ENCODE measurements at regions of chr2 and their contacts with region 1.

Region 1: GRCh38 chr2:189762551-189763298 is at the start of gene OSGEPL1:
- DNase-seq: peak; percentile 95 to 96 (median 95)
- ATAC-seq: peak; percentile 97 to 98 (median 98)
- H3K4me3 ChIP-seq: peak within 1 kb of the TSS; percentile 70 to 86 (median 72)
- H3K27ac ChIP-seq: peak within 1 kb of the TSS; percentile 78 to 84 (median 83)
- H3K4me1 ChIP-seq: peaks cover 0 to 13% (median 0%) of the 10 kb centered on the region in 4 donors
- H3K27me3 ChIP-seq: no peaks in the 10 kb centered on the region
- CTCF ChIP-seq: peak; percentile 33 to 55 (median 44)
- POLR2A ChIP-seq: peak; percentile 60
- total RNA-seq, gene OSGEPL1: 2.6 to 6.1 (median 4.3) TPM

Region 2: GRCh38 chr2:189483998-189484740 is 278.6 kb before region 1 on chr2:
- intact Hi-C with region 1: no loop called
- DNase-seq: no peak
- ATAC-seq: peak in 2 of 4 donors; percentile 39 to 45
- H3K4me3 ChIP-seq: no peak overlapping the region
- H3K27ac ChIP-seq: no peak overlapping the region
- H3K4me1 ChIP-seq: peaks cover 0 to 12% (median 3%) of the 10 kb centered on the region in 4 donors
- H3K27me3 ChIP-seq: no peaks in the 10 kb centered on the region
- CTCF ChIP-seq: no peak
- POLR2A ChIP-seq: no peak

Region 3: GRCh38 chr2:189661148-189661956 is 101.4 kb before region 1 on chr2 and contains the start of gene ASNSD1:
- intact Hi-C with region 1: loop called in 1 of 2 experiments (anchors 10 kb)
- DNase-seq: peak; percentile 99
- ATAC-seq: peak; percentile 98 to 99 (median 98)
- H3K4me3 ChIP-seq: peak within 1 kb of the TSS; percentile 75 to 88 (median 77)
- H3K27ac ChIP-seq: peak within 1 kb of the TSS; percentile 78 to 88 (median 83)
- H3K4me1 ChIP-seq: peaks cover 0 to 16% (median 6%) of the 10 kb centered on the region in 4 donors
- H3K27me3 ChIP-seq: no peaks in the 10 kb centered on the region
- CTCF ChIP-seq: peak; percentile 94 to 99 (median 98)
- POLR2A ChIP-seq: peak; percentile 85
- total RNA-seq, gene ASNSD1: 18.7 to 31.6 (median 27.0) TPM